ENCODE measurements at regions of chr10 and their contacts with region 1.

Region 1: DNA sequence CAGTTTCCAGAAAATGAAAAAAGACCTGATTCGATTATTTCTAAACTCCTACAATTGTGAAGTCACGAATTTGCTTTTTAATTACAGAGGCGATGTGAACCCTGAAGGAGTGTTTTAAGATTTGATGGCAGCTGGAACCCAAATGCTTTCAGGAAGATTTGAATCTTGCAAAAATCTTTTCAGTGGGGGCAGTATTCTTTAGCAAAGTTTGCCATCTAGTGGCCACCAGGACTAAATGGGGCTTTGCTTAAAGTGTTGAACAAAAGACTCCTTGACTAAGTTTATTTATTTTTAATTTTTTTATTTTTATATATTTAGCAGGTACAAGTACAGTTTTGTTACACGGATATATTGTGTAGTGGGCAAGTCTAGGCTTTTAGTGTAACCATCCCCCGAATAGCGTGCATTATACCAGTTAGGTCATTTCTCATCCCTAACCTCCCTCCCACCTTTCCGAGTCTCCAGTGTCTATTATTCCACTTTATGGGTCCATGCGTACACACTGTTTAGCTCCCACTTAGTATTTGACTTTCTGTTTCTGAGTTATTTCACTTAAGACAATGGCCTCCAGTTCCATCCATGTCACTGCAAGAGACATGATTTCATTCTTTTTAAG is 98.8 kb downstream of the CACNB2 start:
- DNase-seq: peak; percentile 34
- ATAC-seq: peak; percentile 65
- H3K4me3 ChIP-seq: no peak overlapping the region
- H3K27ac ChIP-seq: no peak overlapping the region
- H3K4me1 ChIP-seq: no peaks in the 10 kb centered on the region
- H3K27me3 ChIP-seq: peaks cover 9% of the 10 kb centered on the region; the same call in 1 of the 2 replicates
- CTCF ChIP-seq: peak; percentile 59 to 71 (median 70); a peak in 5 of 6 replicates
- POLR2A ChIP-seq: no peak
- RAD21 ChIP-seq: peak; percentile 70

Region 2: GRCh38 chr10:17617031-17617911 is 621.7 kb before region 1 on chr10 and contains the start of gene HACD1:
- CTCF ChIA-PET with region 1: no interaction called
- POLR2A ChIA-PET with region 1: no interaction called
- RAD21 ChIA-PET with region 1: no interaction called
- intact Hi-C with region 1: loop called (anchors 2 kb)
- DNase-seq: peak; percentile 59
- ATAC-seq: peak; percentile 85
- H3K4me3 ChIP-seq: peak within 1 kb of the TSS; percentile 54 to 86
- H3K27ac ChIP-seq: peak within 1 kb of the TSS; percentile 97
- H3K4me1 ChIP-seq: peaks cover 7 to 21% of the 10 kb centered on the region in 2 experiments; a peak in 3 of 4 replicates
- H3K27me3 ChIP-seq: no peaks in the 10 kb centered on the region
- CTCF ChIP-seq: peak in 2 of 3 experiments; percentile 18 to 20; a peak in 3 of 6 replicates
- POLR2A ChIP-seq: peak; percentile 83
- RAD21 ChIP-seq: peak; percentile 23; the same call in 1 of the 2 replicates
- total RNA-seq, gene HACD1: 21.6 TPM

Measured in HCT116 (cell line).